GM13977 (cell line): ENCODE measurements at regions of chr6 and their contacts with region 1.

Region 1: GRCh38 chr6:108541838-108542759 is 18.6 kb upstream of the FOXO3 start:
- DNase-seq: peak; percentile 61
- CTCF ChIP-seq: peak; percentile 84

Region 2: DNA sequence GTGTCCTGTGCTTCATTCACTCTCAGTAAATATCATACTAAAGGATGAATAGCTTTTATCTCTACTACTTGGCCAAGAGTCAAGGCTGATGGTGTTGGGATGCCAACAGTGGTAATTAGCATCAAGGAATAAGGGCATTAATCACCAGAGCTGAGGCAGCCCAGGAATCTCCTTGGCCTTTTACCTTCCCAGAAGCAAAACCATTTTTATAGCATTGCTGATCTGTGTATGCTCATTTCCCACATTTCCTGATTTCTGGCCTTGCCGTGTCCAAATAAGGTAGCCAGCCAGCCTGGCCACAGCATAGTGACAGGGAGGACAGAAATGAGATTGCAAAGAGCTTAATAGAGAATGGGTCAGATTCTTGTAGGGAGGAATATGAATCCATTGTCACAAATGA is 58.1 kb before region 1 on chr6:
- in situ Hi-C with region 1: no loop called
- DNase-seq: no peak
- CTCF ChIP-seq: no peak

Region 3: DNA sequence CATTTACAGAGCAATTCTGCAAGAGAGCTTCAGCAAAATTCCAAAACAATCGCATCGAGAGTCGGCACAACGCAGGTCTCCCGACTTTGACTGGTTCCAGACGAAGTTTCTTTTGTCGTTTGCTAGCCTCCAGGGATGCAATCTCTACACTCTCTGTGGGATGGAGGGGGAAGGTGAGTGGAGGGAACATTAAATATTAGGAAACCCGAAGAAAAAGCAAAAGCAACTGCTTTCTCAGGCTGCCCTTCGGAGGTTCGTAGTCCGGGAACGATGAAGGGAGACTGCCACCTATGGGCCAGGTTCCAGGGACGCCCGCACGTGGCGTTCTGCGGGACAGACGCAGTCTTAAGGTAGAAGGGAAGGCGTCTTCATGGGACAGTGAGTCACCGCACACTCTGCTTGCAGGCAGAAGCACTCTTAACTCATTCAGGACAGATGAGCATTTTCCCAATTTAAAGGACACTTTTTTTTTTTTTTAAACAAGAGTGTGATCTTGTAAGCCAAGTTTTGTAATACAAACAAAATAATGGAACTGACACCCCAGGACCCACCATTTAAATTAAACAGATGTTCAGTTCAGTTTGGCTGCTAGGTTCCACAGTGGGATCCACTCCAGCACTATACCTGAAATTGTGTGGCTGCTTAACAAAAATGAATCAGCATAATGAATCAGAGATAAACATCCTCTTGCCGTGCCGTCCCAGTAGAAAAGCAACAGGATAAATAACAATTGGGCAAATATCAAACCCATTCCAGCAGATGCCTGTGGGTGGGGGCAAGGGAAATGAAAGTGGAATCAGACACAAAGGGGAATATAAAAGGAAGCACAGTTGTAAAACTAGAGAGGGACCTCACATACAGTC is 240.3 kb after region 1 on chr6:
- in situ Hi-C with region 1: loop called (anchors 10 kb)
- DNase-seq: peak; percentile 79
- CTCF ChIP-seq: peak; percentile 76

Region 4: GRCh38 chr6:108896111-108896661 is 354.1 kb after region 1 on chr6:
- in situ Hi-C with region 1: loop called (anchors 10 kb)
- DNase-seq: no peak
- CTCF ChIP-seq: no peak

Region 5: DNA sequence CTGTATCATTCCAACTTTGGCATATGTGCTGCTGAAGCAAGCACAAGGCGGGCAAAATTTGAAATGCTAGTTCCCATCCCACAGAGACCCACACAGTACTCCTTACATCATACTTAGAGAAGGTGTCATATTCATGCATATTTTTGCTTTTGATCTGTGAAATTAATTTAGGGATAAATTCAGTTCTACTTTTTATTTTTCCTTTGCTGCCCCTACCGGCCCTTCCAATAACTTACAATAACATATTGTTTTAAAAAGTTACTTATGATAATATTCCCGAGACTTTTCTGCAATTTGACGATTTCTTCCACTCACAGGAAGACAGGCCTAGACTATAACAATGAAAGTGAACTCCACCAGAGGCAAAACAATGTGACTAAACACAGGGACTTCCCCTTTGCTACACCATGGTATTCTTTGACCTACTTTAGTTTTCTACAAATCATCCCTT is 517.5 kb after region 1 on chr6:
- in situ Hi-C with region 1: loop called (anchors 10 kb)
- DNase-seq: peak; percentile 34
- CTCF ChIP-seq: no peak